Spleen (tissue), 13 donors: ENCODE measurements at regions of chr19 and their contacts with region 1.

Region 1: GRCh38 chr19:32674959-32675719 is at the start of gene ANKRD27:
- DNase-seq: peak; percentile 99
- H3K4me3 ChIP-seq: peak within 1 kb of the TSS; percentile 87 to 99 (median 96)
- H3K27ac ChIP-seq: peak within 1 kb of the TSS; percentile 76 to 94 (median 88)
- H3K4me1 ChIP-seq: peaks cover 18 to 65% (median 48%) of the 10 kb centered on the region in 6 donors
- H3K27me3 ChIP-seq: peaks cover 0 to 45% (median 21%) of the 10 kb centered on the region in 7 donors
- CTCF ChIP-seq: peak in 3 of 11 experiments; percentile 17 to 44 (median 22)
- POLR2A ChIP-seq: peak in 1 of 3 donors; percentile 31
- total RNA-seq, gene ANKRD27: 24.0 to 31.7 (median 29.4) TPM

Region 2: GRCh38 chr19:32599736-32600157 is 75.4 kb before region 1 on chr19:
- intact Hi-C with region 1: loop called (anchors 10 kb)
- DNase-seq: no peak
- H3K4me3 ChIP-seq: no peak overlapping the region
- H3K27ac ChIP-seq: no peak overlapping the region
- H3K4me1 ChIP-seq: no peaks in the 10 kb centered on the region
- H3K27me3 ChIP-seq: no peaks in the 10 kb centered on the region
- CTCF ChIP-seq: peak; percentile 47 to 84 (median 75)
- POLR2A ChIP-seq: no peak